ENCODE measurements at regions of chr12 and their contacts with region 1.

Region 1: DNA sequence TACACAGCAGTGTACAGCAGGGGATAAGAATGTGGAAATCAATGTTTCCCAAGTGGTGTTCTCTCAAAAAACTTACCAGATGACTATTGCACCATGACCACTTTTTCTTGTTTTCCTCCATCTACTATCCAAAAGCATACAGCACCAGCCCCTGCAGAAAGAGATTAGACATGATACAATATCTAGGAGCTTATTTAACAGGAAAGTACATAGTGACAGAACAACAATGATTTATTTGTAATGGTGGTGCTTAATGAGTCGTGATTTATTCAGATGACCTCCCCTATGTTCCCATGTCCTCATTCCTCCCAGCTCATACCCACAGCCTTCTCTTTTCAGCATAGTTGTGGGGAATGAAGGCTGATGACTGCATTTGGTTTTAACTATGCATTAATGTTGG is 413.6 kb downstream of the BTG1 start:
- DNase-seq: no peak
- ATAC-seq: no peak
- H3K4me3 ChIP-seq: no peak overlapping the region
- H3K4me3 Mint-ChIP-seq: no peak overlapping the region
- H3K27ac ChIP-seq: no peak overlapping the region
- H3K27ac Mint-ChIP-seq: no peak overlapping the region
- H3K4me1 ChIP-seq: no peaks in the 10 kb centered on the region
- H3K4me1 Mint-ChIP-seq: no peaks in the 10 kb centered on the region
- H3K27me3 ChIP-seq: no peaks in the 10 kb centered on the region
- H3K27me3 Mint-ChIP-seq: no peaks in the 10 kb centered on the region

Region 2: GRCh38 chr12:90741611-90742010 is 990.5 kb before region 1 on chr12:
- CTCF ChIA-PET with region 1: no interaction called
- POLR2A ChIA-PET with region 1: no interaction called
- intact Hi-C with region 1: no loop called
- DNase-seq: no peak
- ATAC-seq: no peak
- H3K4me3 ChIP-seq: no peak overlapping the region
- H3K4me3 Mint-ChIP-seq: no peak overlapping the region
- H3K27ac ChIP-seq: no peak overlapping the region
- H3K27ac Mint-ChIP-seq: no peak overlapping the region
- H3K4me1 ChIP-seq: no peaks in the 10 kb centered on the region
- H3K4me1 Mint-ChIP-seq: no peaks in the 10 kb centered on the region
- H3K27me3 ChIP-seq: no peaks in the 10 kb centered on the region
- H3K27me3 Mint-ChIP-seq: no peaks in the 10 kb centered on the region

Region 3: DNA sequence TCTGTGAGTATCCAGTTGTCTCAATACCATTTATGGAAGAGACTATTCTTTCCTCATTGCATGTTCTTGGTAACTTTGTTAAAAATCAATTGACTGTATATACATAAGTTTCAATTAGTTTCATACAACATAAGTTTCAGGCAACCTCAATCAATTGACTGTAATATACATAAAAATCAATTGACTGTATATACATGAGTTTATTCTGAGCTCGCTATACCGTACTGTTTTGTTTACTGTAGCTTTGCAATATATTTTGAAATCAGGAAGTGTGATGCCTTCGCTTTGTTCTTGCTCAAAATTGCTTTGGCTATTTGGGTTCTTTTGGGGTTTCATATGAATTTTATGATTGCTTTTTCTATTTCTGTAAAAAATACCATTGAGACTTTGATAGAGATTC is 21.6 kb after region 1 on chr12:
- CTCF ChIA-PET with region 1: no interaction called
- POLR2A ChIA-PET with region 1: no interaction called
- intact Hi-C with region 1: loop called in 1 of 2 experiments (anchors 2 kb)
- DNase-seq: no peak
- ATAC-seq: no peak
- H3K4me3 ChIP-seq: no peak overlapping the region
- H3K4me3 Mint-ChIP-seq: no peak overlapping the region
- H3K27ac ChIP-seq: no peak overlapping the region
- H3K27ac Mint-ChIP-seq: no peak overlapping the region
- H3K4me1 ChIP-seq: no peaks in the 10 kb centered on the region
- H3K4me1 Mint-ChIP-seq: peaks cover 0 to 5% (median 2%) of the 10 kb centered on the region in 7 donors
- H3K27me3 ChIP-seq: no peaks in the 10 kb centered on the region
- H3K27me3 Mint-ChIP-seq: no peaks in the 10 kb centered on the region

Region 4: DNA sequence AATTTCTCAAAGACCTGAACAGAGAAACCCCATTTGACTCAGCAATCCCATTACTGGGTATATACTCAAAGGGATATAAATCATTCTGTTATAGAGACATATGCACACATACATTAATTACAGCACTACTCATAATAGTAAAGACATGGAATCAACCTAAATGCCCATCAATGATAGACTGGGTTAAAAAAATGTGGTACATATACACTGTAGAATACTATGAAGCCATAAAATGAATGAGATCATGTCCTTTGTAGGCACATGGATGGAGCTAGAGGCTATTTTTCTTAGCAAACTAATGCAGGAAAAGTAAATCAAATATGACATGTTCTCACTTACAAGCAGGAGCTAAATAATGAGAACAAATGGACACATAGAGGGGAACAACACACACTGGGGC is 109.7 kb after region 1 on chr12:
- CTCF ChIA-PET with region 1: no interaction called
- POLR2A ChIA-PET with region 1: no interaction called
- intact Hi-C with region 1: no loop called
- DNase-seq: no peak
- ATAC-seq: no peak
- H3K4me3 ChIP-seq: no peak overlapping the region
- H3K4me3 Mint-ChIP-seq: no peak overlapping the region
- H3K27ac ChIP-seq: no peak overlapping the region
- H3K27ac Mint-ChIP-seq: peak overlapping the region in 2 of 9 donors; percentile 43 to 57
- H3K4me1 ChIP-seq: peaks cover 0 to 4% of the 10 kb centered on the region in 2 donors
- H3K4me1 Mint-ChIP-seq: peaks cover 0 to 22% (median 16%) of the 10 kb centered on the region in 7 donors
- H3K27me3 ChIP-seq: no peaks in the 10 kb centered on the region
- H3K27me3 Mint-ChIP-seq: no peaks in the 10 kb centered on the region

Measured in naive thymus-derived CD4-positive, alpha-beta T cell (primary cell).